ENCODE measurements at regions of chr18 and their contacts with region 1.

Region 1: DNA sequence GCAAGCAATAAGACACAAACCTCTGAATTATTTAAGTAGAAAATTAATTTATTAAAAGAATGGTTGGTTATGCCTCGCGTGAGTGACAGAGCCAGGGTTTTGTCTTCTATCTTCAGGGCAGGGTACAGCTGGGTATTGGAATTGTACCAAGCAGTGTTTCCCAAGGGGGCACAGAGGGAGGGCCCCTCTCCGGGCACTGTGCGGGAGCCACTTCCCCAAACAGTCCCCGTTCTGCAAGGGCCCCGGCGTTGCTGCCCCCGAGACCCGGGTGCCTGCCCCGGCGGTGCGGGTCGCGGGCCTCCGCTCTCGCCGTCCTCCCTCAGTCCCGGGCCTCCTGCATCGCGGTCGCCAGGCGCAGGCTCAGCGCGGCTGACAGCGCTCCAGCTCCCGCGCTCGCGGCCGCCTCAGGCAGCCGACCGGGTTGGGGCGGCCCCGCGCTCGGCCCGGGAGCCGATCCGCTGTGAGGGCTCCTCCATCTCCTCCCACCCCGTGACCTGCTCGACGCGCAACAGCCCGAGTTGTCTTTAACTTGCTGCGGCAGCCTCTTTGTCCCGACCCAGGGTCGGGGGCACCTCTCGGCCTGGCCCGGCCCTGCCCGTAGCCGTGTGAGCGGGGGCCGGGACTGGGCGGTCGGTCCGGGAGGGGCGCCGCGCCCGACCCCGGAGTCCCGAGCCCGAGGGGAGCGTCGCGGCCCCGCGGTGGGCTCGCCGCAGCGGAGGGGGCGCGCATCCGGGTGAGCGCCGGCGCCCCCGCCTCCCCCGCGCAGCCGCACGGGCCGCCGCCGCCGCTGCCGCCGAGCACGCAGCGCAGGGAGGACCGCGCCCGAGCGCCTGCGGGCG is 620 bp upstream of the GALNT1 start:
- DNase-seq: peak; percentile 40 to 61
- ATAC-seq: peak; percentile 80
- H3K4me3 ChIP-seq: peak overlapping the region; percentile 63 to 90 (median 82)
- H3K27ac ChIP-seq: peak overlapping the region; percentile 87 to 97 (median 95)
- H3K4me1 ChIP-seq: peaks cover 19 to 24% of the 10 kb centered on the region in 2 donors
- H3K27me3 ChIP-seq: no peaks in the 10 kb centered on the region
- CTCF ChIP-seq: no peak
- POLR2A ChIP-seq: peak; percentile 32 to 41

Region 2: DNA sequence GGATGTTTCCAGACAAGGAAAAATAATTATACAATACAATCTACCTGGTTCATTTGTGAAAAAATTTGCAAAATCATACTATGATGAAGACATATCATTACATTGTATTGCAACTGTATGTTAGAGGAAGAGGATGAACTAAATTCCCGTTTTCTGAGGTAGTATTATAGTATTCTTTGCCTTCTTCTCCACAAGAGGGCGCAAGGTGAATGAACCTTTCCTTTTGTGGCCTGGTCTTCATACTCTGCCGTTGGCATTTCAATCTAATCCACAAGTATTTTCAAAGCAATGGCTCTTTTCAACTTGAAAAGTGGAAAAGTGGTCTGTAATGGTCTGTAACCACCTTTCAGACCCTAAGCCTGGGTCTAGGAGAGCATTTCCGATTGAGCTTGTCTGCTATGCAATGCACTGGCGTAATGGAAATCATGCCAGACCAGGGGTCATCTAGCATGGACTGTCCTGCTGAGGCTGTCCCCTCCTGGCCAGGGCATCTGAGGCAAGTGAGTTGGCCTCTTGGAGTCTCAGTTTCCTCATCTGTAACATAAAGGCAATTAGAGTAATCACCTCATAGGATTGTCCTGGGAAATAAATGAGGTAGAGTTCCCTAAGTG is 172.9 kb before region 1 on chr18:
- in situ Hi-C with region 1: no loop called
- intact Hi-C with region 1: loop called (anchors 10 kb)
- DNase-seq: peak; percentile 12 to 17
- ATAC-seq: peak; percentile 85 to 96
- H3K4me3 ChIP-seq: no peak overlapping the region
- H3K27ac ChIP-seq: no peak overlapping the region
- H3K4me1 ChIP-seq: peaks cover 3% of the 10 kb centered on the region in 2 donors
- H3K27me3 ChIP-seq: no peaks in the 10 kb centered on the region
- CTCF ChIP-seq: peak; percentile 57 to 76 (median 65)
- POLR2A ChIP-seq: no peak

Region 3: GRCh38 chr18:35497370-35498197 is 83.3 kb before region 1 on chr18 and contains the start of gene INO80C:
- in situ Hi-C with region 1: loop called in 1 of 4 experiments (anchors 10 kb)
- intact Hi-C with region 1: loop called (anchors 1 kb)
- DNase-seq: peak; percentile 86 to 89
- ATAC-seq: peak; percentile 98
- H3K4me3 ChIP-seq: peak within 1 kb of the TSS; percentile 73 to 93 (median 82)
- H3K27ac ChIP-seq: peak within 1 kb of the TSS; percentile 93 to 99 (median 94)
- H3K4me1 ChIP-seq: peaks cover 13 to 26% of the 10 kb centered on the region in 2 donors
- H3K27me3 ChIP-seq: no peaks in the 10 kb centered on the region
- CTCF ChIP-seq: peak in 2 of 5 experiments; percentile 29 to 44
- POLR2A ChIP-seq: peak; percentile 79 to 82
- total RNA-seq, gene INO80C: 5.3 to 6.4 (median 5.5) TPM

Region 4: DNA sequence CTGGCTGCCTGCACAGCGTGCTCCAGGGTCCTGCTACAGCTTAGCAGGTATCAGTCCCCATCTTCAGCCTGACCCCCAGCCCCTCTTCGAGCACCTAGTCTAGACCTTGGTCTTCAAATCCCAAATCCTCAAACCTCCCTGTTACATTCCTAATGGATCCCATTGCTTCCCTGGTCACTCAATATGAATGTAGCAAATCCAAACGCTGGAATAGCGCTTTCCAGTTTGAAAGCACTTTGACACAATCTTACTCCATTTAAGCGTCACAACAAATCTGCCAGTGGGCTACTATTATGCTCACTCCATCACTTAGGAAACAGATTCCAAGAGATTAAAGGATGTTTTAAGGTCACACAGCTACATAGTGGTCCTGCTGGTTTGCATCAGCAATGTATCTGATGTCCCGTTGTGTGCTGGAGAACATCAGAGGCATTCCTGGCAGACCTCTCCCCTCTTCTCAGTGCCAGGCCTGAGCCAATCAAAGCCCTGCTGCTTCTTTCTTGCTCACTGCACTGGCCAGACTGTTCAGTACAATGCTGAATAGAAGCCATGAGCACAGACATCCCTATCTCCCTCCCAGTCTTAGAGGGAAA is 72.1 kb before region 1 on chr18:
- in situ Hi-C with region 1: no loop called
- intact Hi-C with region 1: no loop called
- DNase-seq: no peak
- ATAC-seq: no peak
- H3K4me3 ChIP-seq: no peak overlapping the region
- H3K27ac ChIP-seq: no peak overlapping the region
- H3K4me1 ChIP-seq: peaks cover 20 to 30% of the 10 kb centered on the region in 2 donors
- H3K27me3 ChIP-seq: no peaks in the 10 kb centered on the region
- CTCF ChIP-seq: no peak
- POLR2A ChIP-seq: no peak

Region 5: DNA sequence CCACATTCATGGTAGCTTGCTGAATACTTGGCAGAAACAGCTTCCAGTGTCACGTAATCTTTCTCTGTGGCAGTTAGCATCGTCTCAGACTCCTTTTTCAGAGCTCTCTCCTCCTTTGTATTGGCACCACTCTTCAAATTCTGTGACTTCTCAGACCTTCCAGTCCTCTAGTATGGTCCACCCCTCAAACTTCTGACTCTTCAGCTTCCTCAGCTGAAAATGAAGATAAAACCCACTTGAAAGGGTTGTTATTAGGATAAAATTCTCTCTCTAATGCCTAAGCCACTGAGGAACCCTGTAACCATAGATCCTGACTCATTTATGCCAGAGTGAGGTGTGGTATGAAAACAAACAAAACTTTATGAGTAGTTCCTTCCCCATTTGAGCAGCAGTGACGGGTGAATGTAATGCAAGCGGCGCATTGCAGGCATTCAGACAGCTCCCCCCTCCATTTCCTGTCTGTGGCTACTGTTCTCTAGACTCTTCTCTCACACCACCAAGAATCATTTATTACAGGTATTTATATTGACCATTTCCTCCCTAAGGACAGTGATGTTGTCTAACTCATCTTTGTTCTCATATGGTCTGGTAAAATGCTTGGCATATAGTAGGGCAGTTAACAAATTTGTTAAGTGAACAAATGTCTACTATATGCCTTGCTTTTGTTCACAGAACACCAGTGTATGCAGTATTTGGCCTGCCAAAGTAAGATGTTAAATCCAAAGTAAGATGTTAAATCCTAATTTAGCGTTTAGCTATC is 35.9 kb after region 1 on chr18:
- in situ Hi-C with region 1: no loop called
- intact Hi-C with region 1: loop called (anchors 5 kb)
- DNase-seq: peak in 1 of 2 donors; percentile 14
- ATAC-seq: peak; percentile 18 to 37
- H3K4me3 ChIP-seq: no peak overlapping the region
- H3K27ac ChIP-seq: peak overlapping the region in 2 of 4 donors; percentile 41 to 45
- H3K4me1 ChIP-seq: peaks cover 66 to 70% of the 10 kb centered on the region in 2 donors
- H3K27me3 ChIP-seq: no peaks in the 10 kb centered on the region
- CTCF ChIP-seq: no peak
- POLR2A ChIP-seq: no peak

Region 6: GRCh38 chr18:35695803-35696202 is 114.9 kb after region 1 on chr18:
- in situ Hi-C with region 1: no loop called
- intact Hi-C with region 1: loop called (anchors 10 kb)
- DNase-seq: peak; percentile 26 to 41
- ATAC-seq: peak; percentile 74 to 88
- H3K4me3 ChIP-seq: no peak overlapping the region
- H3K27ac ChIP-seq: peak overlapping the region in 2 of 4 donors; percentile 58 to 66
- H3K4me1 ChIP-seq: peaks cover 7 to 13% of the 10 kb centered on the region in 2 donors
- H3K27me3 ChIP-seq: no peaks in the 10 kb centered on the region
- CTCF ChIP-seq: no peak
- POLR2A ChIP-seq: no peak

Region 7: DNA sequence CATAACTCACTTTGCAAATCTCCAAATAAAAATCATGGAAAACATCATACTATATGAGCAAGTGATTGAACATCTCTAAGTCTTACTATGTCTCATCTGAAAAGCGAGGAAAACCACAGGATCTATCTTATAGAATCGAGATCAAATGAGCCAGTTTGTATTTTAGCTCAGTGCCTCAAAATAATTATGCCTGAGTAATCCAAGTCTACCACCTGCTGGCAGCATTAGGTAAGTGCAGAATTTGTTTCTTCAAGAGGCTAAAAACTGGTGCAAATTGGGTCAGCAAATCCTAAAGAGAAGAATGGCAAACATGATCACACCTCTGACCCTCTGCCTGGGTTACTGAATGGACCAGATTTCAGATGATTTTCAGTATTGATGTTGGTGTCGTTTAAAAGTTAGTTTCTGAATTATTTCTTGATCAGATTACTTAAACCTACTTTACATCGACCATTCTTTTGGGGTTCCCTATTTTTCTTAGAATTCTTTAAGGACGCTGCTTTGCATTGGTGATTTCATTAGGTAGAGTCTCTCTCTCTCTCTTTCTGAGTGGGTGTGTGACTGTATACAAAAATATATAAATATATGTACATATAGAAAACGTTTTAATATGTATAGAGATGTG is 703.9 kb after region 1 on chr18:
- in situ Hi-C with region 1: no loop called
- intact Hi-C with region 1: no loop called
- DNase-seq: no peak
- ATAC-seq: peak; percentile 58 to 62
- H3K4me3 ChIP-seq: no peak overlapping the region
- H3K27ac ChIP-seq: no peak overlapping the region
- H3K4me1 ChIP-seq: no peaks in the 10 kb centered on the region
- H3K27me3 ChIP-seq: peaks cover 0 to 6% (median 0%) of the 10 kb centered on the region in 3 donors
- CTCF ChIP-seq: peak; percentile 71 to 88 (median 83)
- POLR2A ChIP-seq: no peak

Measured in gastrocnemius medialis (tissue), 4 donors.